Cardiac septum (tissue), 1 donor: ENCODE measurements at regions of chr6 and their contacts with region 1.

Region 1: DNA sequence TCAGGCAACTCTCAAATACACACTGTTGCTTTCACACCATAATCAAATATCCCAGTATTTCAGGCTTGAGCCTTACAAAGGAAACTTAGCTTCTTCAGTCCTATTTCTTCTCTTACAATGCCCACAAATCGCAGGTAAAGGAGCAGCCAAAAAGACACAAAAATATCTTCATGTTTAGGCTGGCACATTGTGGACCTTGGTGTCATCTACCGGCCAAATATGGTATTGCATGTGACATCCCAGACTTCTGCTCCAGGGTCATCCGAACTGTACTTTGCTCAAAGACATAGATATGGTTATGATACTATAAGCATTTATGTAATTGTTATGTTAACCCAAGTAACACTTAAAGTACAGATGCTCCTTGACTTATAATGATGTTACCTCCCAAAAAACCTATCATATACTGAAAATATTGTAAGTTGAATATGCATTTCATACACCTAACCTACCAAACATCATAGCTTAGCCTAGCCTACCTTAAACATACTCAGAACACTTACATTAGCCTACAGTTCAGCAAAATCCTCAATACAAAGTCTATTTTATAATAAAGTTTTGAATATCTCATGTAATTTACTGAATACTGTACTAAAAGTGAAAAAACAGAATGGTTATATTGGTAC is 4.6 kb downstream of the OR2H2 start:
- DNase-seq: no peak

Region 2: GRCh38 chr6:28683944-28684538 is 905.5 kb before region 1 on chr6:
- intact Hi-C with region 1: loop called (anchors 5 kb)
- DNase-seq: no peak

Region 3: DNA sequence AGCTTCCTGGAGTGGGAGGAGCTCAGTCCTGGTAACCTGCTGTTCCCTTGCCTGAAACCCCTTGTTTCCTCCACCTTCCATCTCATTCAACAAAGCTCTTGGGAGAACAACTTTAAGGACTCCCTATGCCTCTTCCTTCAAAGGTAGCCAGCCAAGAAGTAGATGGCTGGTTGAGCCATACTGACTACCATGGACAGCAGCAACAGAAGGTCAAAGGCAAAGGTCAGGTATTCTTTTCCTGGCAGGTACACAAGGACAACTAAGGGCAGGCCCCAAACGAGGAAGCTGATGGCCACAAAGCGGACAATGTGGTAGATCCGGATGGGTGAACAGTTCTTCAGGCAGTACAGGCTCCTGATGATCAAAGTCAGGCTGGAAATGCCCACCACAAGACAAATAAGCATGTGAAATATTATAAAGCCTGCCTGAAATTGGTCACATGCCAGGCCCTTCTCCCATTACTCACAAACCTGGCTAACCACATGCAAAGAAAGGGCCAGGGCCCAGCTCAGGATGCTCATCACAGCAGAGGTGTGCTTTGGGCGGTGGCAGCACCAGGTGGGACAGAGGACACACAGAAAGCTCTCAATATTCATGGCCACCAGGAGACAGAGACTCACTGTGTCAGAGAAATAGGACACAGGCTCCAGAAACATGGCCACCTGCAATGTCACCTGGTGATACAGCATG is 51.7 kb before region 1 on chr6:
- intact Hi-C with region 1: no loop called
- DNase-seq: no peak